IMR-90 (cell line): ENCODE measurements at regions of chr4 and their contacts with region 1.

Region 1: GRCh38 chr4:177339477-177340374 is 30.1 kb downstream of the NEIL3 start:
- DNase-seq: peak; percentile 51
- ATAC-seq: peak; percentile 84
- H3K4me3 ChIP-seq: no peak overlapping the region
- H3K27ac ChIP-seq: no peak overlapping the region; the same call in 1 of the 2 replicates
- H3K4me1 ChIP-seq: peaks cover 2% of the 10 kb centered on the region; the same call in 1 of the 2 replicates
- H3K27me3 ChIP-seq: no peaks in the 10 kb centered on the region
- CTCF ChIP-seq: peak; percentile 79
- POLR2A ChIP-seq: no peak
- RAD21 ChIP-seq: peak; percentile 80

Region 2: DNA sequence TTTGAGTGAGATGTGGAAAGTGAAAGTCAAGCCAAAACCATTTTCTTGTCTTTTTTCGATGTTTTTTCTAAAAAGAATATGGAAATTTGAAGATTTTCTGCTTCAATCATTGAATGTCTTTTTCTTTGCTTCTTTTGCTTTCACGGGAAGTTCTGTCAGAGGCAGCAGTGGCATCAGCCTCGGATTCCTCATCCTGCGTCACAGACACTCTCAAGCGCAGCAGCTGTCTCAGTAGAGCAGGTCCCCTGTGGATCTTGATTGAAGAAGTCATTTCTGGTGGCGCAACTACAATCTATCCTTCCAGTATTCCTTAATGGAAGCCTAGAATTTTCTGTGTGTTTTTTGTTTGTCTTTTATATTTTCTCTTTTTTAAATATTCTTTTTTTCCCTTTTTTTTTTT is 82.8 kb before region 1 on chr4:
- CTCF ChIA-PET with region 1: interaction called, 3 read pairs
- POLR2A ChIA-PET with region 1: no interaction called
- dilution Hi-C with region 1: no loop called
- in situ Hi-C with region 1: loop called (anchors 5 kb)
- intact Hi-C with region 1: no loop called
- DNase-seq: no peak
- ATAC-seq: no peak
- H3K4me3 ChIP-seq: no peak overlapping the region
- H3K27ac ChIP-seq: no peak overlapping the region
- H3K4me1 ChIP-seq: no peaks in the 10 kb centered on the region
- H3K27me3 ChIP-seq: no peaks in the 10 kb centered on the region
- CTCF ChIP-seq: no peak
- POLR2A ChIP-seq: no peak
- RAD21 ChIP-seq: no peak